ENCODE measurements at regions of chr1 and their contacts with region 1.

Region 1: GRCh38 chr1:204257954-204258752 is 44.4 kb upstream of the GOLT1A start:
- DNase-seq: peak; percentile 56 to 93
- H3K4me3 ChIP-seq: no peak overlapping the region
- H3K27ac ChIP-seq: no peak overlapping the region
- H3K4me1 ChIP-seq: peaks cover 14 to 28% (median 21%) of the 10 kb centered on the region in 4 experiments
- H3K27me3 ChIP-seq: no peaks in the 10 kb centered on the region
- CTCF ChIP-seq: peak; percentile 96 to 97 (median 97)
- EP300 ChIP-seq: no peak
- POLR2A ChIP-seq: no peak
- RAD21 ChIP-seq: peak; percentile 89 to 94

Region 2: GRCh38 chr1:204013052-204013451 is 245.1 kb before region 1 on chr1:
- CTCF ChIA-PET with region 1: no interaction called
- POLR2A ChIA-PET with region 1: no interaction called
- DNase-seq: no peak
- H3K4me3 ChIP-seq: no peak overlapping the region
- H3K27ac ChIP-seq: no peak overlapping the region
- H3K4me1 ChIP-seq: peaks cover 0 to 7% (median 0%) of the 10 kb centered on the region in 4 experiments; a peak in 2 of 7 replicates
- H3K27me3 ChIP-seq: no peaks in the 10 kb centered on the region
- CTCF ChIP-seq: no peak
- EP300 ChIP-seq: no peak
- POLR2A ChIP-seq: no peak
- RAD21 ChIP-seq: no peak

Region 3: DNA sequence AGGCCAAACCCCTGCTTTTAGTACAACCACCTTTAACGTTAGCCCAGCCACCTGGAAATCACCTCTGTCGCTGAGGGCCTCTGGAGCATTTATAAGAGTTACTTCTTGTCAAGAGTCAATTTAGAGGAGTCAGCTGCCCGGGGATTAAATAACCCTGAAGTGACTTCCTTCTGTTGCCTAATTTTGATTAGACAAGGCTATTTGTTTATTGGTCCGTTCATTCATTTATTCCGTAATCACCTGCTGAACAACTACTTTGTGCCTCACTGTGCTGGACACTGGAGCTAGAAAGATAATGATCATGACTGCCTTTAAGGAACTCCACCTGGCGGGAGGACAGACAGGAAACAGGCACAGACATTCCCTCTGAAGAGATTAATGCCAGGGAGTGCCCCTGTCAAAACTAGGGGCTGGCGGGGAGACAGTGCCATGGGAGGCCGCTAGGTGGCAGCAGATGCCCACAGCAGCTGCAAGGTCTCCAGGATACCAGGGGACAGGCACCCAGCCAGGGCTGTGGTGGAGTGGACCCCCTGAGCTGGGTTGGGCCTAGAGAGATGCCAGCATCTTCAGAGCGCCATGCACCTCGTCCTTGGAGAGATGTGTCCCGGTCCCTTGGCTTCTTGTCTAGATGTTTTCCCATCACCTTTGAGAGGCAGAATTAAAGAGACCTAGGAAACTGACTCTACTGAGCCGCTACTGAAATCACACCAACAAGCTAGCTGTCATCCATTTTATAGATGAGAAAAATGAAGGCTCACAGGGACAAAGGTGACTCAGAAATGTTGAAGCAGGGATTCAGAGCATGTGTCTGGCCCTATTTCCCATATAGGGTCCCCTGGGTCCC is 95.7 kb before region 1 on chr1:
- CTCF ChIA-PET with region 1: interaction called, 25 read pairs
- POLR2A ChIA-PET with region 1: no interaction called
- DNase-seq: peak; percentile 63 to 100
- H3K4me3 ChIP-seq: no peak overlapping the region
- H3K27ac ChIP-seq: no peak overlapping the region
- H3K4me1 ChIP-seq: no peaks in the 10 kb centered on the region; a peak in 1 of 7 replicates
- H3K27me3 ChIP-seq: no peaks in the 10 kb centered on the region
- CTCF ChIP-seq: peak; percentile 99
- EP300 ChIP-seq: no peak
- POLR2A ChIP-seq: no peak
- RAD21 ChIP-seq: peak; percentile 100

Region 4: GRCh38 chr1:204213668-204214662 is 44.2 kb before region 1 on chr1 and contains the start of gene GOLT1A:
- CTCF ChIA-PET with region 1: interaction called, 86 read pairs
- POLR2A ChIA-PET with region 1: no interaction called
- DNase-seq: peak; percentile 66 to 98
- H3K4me3 ChIP-seq: peak within 1 kb of the TSS; percentile 47 to 69 (median 61)
- H3K27ac ChIP-seq: 0 out of 2 replicates have a peak within 1 kb of the TSS, but pooled peaks have one; percentile 11
- H3K4me1 ChIP-seq: peaks cover 0 to 3% (median 2%) of the 10 kb centered on the region in 4 experiments; a peak in 4 of 7 replicates
- H3K27me3 ChIP-seq: no peaks in the 10 kb centered on the region
- CTCF ChIP-seq: peak; percentile 57 to 87 (median 84)
- EP300 ChIP-seq: no peak
- POLR2A ChIP-seq: peak in 1 of 2 experiments; percentile 14; a peak in 1 of 3 replicates
- RAD21 ChIP-seq: peak; percentile 85 to 89
- total RNA-seq, gene GOLT1A: 6.9 and 7.5 TPM in 2 replicates

Region 5: DNA sequence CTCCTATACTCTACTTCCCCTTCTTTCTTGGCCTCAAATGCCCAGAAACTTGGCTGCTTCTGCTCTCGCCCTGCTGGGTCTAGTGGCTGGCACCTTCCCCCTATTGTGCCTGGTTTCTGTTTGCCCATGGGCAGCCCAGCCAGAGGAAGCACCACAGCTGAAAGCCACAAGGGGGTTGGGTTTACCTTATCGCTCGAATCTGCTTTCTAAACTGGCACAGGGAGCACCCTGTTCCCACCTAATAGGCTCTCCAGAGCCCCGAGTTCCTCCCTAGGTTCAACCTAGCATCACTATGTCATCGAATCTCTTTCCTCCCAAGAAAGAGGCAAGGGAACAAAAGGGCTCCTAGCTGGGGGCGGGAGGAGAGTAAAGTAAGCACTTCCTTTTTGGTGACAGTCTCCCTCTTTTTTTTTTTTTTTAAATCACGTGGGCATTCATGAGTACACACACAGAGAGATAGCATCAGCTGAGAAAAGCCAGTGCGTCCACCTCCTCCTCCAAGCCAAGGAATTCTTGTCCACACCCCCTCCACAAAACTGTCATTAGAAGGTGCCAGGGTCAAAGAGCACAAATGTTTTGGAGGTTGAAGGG is 28.8 kb after region 1 on chr1:
- CTCF ChIA-PET with region 1: interaction called, 335 read pairs
- POLR2A ChIA-PET with region 1: no interaction called
- DNase-seq: no peak
- H3K4me3 ChIP-seq: 0 out of 8 replicates have a peak overlapping the region, but pooled peaks of 1 of the 4 experiments have one; percentile 42
- H3K27ac ChIP-seq: no peak overlapping the region
- H3K4me1 ChIP-seq: peaks cover 8 to 22% (median 16%) of the 10 kb centered on the region in 4 experiments
- H3K27me3 ChIP-seq: no peaks in the 10 kb centered on the region
- CTCF ChIP-seq: no peak
- EP300 ChIP-seq: no peak
- POLR2A ChIP-seq: no peak
- RAD21 ChIP-seq: no peak

Region 6: GRCh38 chr1:204307334-204307883 is 49.3 kb after region 1 on chr1:
- CTCF ChIA-PET with region 1: interaction called, 31 read pairs
- POLR2A ChIA-PET with region 1: no interaction called
- DNase-seq: peak in 1 of 2 experiments; percentile 81
- H3K4me3 ChIP-seq: peak overlapping the region; percentile 19 to 48 (median 38); a peak in 6 of 8 replicates
- H3K27ac ChIP-seq: no peak overlapping the region
- H3K4me1 ChIP-seq: peaks cover 10 to 40% (median 20%) of the 10 kb centered on the region in 4 experiments
- H3K27me3 ChIP-seq: no peaks in the 10 kb centered on the region; a peak in 1 of 7 replicates
- CTCF ChIP-seq: peak in 1 of 3 experiments; percentile 19; a peak in 2 of 4 replicates
- EP300 ChIP-seq: no peak
- POLR2A ChIP-seq: no peak
- RAD21 ChIP-seq: peak; percentile 13 to 50; a peak in 2 of 4 replicates

Region 7: GRCh38 chr1:204323887-204324286 is 65.7 kb after region 1 on chr1:
- CTCF ChIA-PET with region 1: interaction called, 15 read pairs
- POLR2A ChIA-PET with region 1: no interaction called
- DNase-seq: no peak
- H3K4me3 ChIP-seq: no peak overlapping the region
- H3K27ac ChIP-seq: no peak overlapping the region
- H3K4me1 ChIP-seq: peaks cover 0 to 9% (median 4%) of the 10 kb centered on the region in 4 experiments; a peak in 6 of 7 replicates
- H3K27me3 ChIP-seq: no peaks in the 10 kb centered on the region
- CTCF ChIP-seq: no peak
- EP300 ChIP-seq: no peak
- POLR2A ChIP-seq: no peak
- RAD21 ChIP-seq: no peak

Region 8: DNA sequence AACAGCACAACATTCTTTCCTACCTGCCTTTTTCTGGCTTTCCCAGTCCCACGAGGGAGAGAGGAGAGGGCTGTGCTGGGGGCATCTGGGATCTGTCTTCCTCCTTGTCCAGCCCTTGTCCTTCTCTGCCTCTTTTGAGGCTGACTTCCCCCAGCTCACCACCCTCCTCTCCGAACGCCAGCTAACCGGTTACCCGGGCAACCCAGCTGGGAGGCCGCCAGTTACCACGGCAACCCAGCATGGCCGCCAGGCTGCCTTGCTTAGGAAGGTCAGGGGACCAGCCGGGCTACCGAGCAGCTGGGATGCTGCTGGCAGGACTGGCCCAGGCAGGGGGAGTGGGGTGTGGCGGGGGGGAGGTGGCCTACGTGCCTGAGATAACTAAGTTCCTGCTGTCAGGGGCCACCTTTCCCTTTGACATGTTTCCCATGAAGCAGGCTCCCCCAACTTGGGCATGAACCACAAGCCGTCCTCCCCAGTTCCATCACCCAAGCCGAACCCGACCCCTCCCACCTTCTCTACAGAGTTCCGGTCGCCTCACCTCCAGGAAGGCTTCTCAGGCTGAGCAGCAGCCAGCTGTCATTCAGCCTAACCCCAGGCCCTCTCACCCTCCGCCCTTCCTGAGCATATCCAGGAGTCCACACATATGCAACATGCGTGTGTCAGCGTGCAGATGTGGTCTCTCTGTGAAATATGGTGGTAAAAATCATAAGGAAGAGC is 92.9 kb after region 1 on chr1:
- CTCF ChIA-PET with region 1: interaction called, 17 read pairs
- POLR2A ChIA-PET with region 1: interaction called, 3 read pairs
- DNase-seq: peak in 1 of 2 experiments; percentile 99
- H3K4me3 ChIP-seq: peak overlapping the region in 1 of 4 experiments; percentile 44; a peak in 3 of 8 replicates
- H3K27ac ChIP-seq: no peak overlapping the region
- H3K4me1 ChIP-seq: peaks cover 6 to 18% (median 14%) of the 10 kb centered on the region in 4 experiments
- H3K27me3 ChIP-seq: no peaks in the 10 kb centered on the region
- CTCF ChIP-seq: no peak
- EP300 ChIP-seq: peak in 1 of 2 experiments; percentile 76; a peak in 1 of 3 replicates
- POLR2A ChIP-seq: no peak
- RAD21 ChIP-seq: no peak

Measured in H1 (cell line).